Activated CD4-positive, alpha-beta memory T cell treated with anti-CD3 and anti-CD28 coated beads, Interleukin-2, amount 10 ng/mL, durations not matched to agents 7 days and 5 days (primary cell): ENCODE measurements at regions of chr12 and their contacts with region 1.

Region 1: GRCh38 chr12:49673446-49674317 is 33.5 kb downstream of the FMNL3 start:
- DNase-seq: no peak
- H3K4me3 Mint-ChIP-seq: no peak overlapping the region
- H3K27ac Mint-ChIP-seq: peak overlapping the region; percentile 68
- H3K4me1 Mint-ChIP-seq: peaks cover 71% of the 10 kb centered on the region
- H3K27me3 Mint-ChIP-seq: no peaks in the 10 kb centered on the region

Region 2: GRCh38 chr12:49655595-49656236 is 18.0 kb before region 1 on chr12:
- CTCF ChIA-PET with region 1: interaction called, 3 read pairs
- POLR2A ChIA-PET with region 1: interaction called, 80 read pairs
- DNase-seq: no peak
- H3K4me3 Mint-ChIP-seq: no peak overlapping the region
- H3K27ac Mint-ChIP-seq: peak overlapping the region; percentile 54
- H3K4me1 Mint-ChIP-seq: peaks cover 8% of the 10 kb centered on the region
- H3K27me3 Mint-ChIP-seq: no peaks in the 10 kb centered on the region

Region 3: GRCh38 chr12:49662998-49663843 is 10.5 kb before region 1 on chr12:
- CTCF ChIA-PET with region 1: interaction called, 7 read pairs
- POLR2A ChIA-PET with region 1: interaction called, 80 read pairs
- DNase-seq: peak; percentile 82
- H3K4me3 Mint-ChIP-seq: peak overlapping the region; percentile 56
- H3K27ac Mint-ChIP-seq: peak overlapping the region; percentile 95
- H3K4me1 Mint-ChIP-seq: peaks cover 60% of the 10 kb centered on the region
- H3K27me3 Mint-ChIP-seq: no peaks in the 10 kb centered on the region